Heart right ventricle (tissue), 16 donors: ENCODE measurements at regions of chrX and their contacts with region 1.

Region 1: GRCh38 chrX:120250522-120251271 is at the start of gene ZBTB33:
- DNase-seq: peak; percentile 90 to 91
- ATAC-seq: peak; percentile 98 to 100 (median 99)
- H3K4me3 ChIP-seq: peak within 1 kb of the TSS; percentile 58 to 82 (median 71)
- H3K27ac ChIP-seq: peak within 1 kb of the TSS; percentile 60 to 93 (median 89)
- H3K4me1 ChIP-seq: peaks cover 0 to 14% (median 0%) of the 10 kb centered on the region in 9 donors
- H3K27me3 ChIP-seq: peaks cover 0 to 10% (median 0%) of the 10 kb centered on the region in 7 donors
- CTCF ChIP-seq: peak; percentile 30 to 80 (median 65)
- total RNA-seq, gene ZBTB33: 5.2 to 8.5 (median 6.6) TPM

Region 2: GRCh38 chrX:120308959-120309872 is 58.5 kb after region 1 on chrX:
- intact Hi-C with region 1: loop called in 1 of 10 experiments (anchors 2 kb)
- DNase-seq: peak; percentile 31 to 36
- ATAC-seq: peak; percentile 54 to 88 (median 82)
- H3K4me3 ChIP-seq: peak overlapping the region in 9 of 10 donors; percentile 9 to 55 (median 42)
- H3K27ac ChIP-seq: no peak overlapping the region
- H3K4me1 ChIP-seq: peaks cover 0 to 25% (median 6%) of the 10 kb centered on the region in 9 donors
- H3K27me3 ChIP-seq: peaks cover 0 to 93% (median 23%) of the 10 kb centered on the region in 7 donors
- CTCF ChIP-seq: peak in 5 of 9 donors; percentile 25 to 47 (median 40)

Region 3: DNA sequence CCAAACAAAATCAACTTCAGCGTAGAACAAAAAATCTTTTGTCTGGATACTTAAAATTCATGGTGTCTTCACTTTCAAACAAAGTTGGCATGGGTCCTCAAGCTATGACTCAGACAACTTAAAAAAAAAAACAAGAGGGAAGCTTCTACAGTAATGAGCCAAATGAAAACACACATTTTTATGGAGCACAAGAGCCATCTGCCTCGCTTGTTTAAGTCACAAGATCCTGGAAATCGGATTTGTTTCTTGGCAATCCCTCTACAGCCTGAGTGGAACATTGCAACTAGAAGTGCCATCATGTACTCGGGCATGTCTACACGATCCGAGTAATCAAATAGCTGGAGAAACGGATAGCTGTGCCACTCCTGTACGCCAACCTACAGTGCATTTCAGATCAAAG is 195.8 kb after region 1 on chrX:
- intact Hi-C with region 1: loop called in 1 of 10 experiments (anchors 10 kb)
- DNase-seq: no peak
- ATAC-seq: peak in 3 of 8 donors; percentile 14 to 33 (median 20)
- H3K4me3 ChIP-seq: no peak overlapping the region
- H3K27ac ChIP-seq: no peak overlapping the region
- H3K4me1 ChIP-seq: peaks cover 0 to 4% (median 0%) of the 10 kb centered on the region in 9 donors
- H3K27me3 ChIP-seq: peaks cover 0 to 2% (median 0%) of the 10 kb centered on the region in 7 donors
- CTCF ChIP-seq: no peak